B cell (primary cell): ENCODE measurements at regions of chr14 and their contacts with region 1.

Region 1: DNA sequence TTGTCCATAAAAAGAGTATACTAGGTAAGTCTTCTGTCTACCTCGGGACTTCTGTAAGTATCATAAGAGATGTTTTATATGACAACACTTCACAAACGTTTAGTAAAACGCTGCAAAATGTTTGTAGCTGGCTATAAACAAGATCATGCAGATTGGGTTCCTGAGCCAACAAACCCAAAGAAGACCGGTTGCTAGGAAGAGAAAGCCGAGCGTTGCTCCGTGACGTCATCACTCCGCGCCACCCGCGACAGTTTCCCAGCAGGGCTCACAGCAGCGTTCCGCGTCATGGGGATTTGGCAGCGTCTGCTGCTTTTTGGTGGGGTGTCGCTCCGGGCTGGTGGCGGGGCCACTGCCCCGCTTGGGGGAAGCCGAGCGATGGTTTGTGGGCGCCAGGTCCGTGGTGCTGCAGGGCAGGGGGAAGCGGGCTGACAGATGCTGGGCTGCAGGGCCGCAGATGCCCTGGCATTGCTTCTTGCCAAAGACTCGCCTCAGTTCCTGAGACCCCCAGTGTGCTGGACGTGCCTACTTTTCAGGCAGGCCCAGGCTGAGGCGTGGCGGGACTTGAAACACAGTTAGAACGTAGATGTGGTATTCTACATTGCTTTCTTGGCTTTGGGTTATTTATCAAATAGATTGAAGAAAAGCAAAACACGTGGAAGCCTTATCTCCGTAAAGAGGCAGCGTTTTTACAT is at the start of gene NUBPL:
- DNase-seq: peak; percentile 98
- ATAC-seq: peak; percentile 96
- H3K4me3 ChIP-seq: peak within 1 kb of the TSS; percentile 67 to 92 (median 84)
- H3K4me3 Mint-ChIP-seq: peak within 1 kb of the TSS; percentile 93
- H3K27ac ChIP-seq: peak within 1 kb of the TSS; percentile 62 to 94
- H3K27ac Mint-ChIP-seq: peak within 1 kb of the TSS; percentile 97
- H3K4me1 ChIP-seq: peaks cover 16 to 17% of the 10 kb centered on the region in 2 donors
- H3K4me1 Mint-ChIP-seq: peaks cover 25% of the 10 kb centered on the region
- H3K27me3 ChIP-seq: peaks cover 0 to 8% (median 3%) of the 10 kb centered on the region in 4 experiments
- H3K27me3 Mint-ChIP-seq: peaks cover 7% of the 10 kb centered on the region
- CTCF ChIP-seq: no peak
- total RNA-seq, gene NUBPL: 14.2 and 15.5 TPM in 2 replicates

Region 2: DNA sequence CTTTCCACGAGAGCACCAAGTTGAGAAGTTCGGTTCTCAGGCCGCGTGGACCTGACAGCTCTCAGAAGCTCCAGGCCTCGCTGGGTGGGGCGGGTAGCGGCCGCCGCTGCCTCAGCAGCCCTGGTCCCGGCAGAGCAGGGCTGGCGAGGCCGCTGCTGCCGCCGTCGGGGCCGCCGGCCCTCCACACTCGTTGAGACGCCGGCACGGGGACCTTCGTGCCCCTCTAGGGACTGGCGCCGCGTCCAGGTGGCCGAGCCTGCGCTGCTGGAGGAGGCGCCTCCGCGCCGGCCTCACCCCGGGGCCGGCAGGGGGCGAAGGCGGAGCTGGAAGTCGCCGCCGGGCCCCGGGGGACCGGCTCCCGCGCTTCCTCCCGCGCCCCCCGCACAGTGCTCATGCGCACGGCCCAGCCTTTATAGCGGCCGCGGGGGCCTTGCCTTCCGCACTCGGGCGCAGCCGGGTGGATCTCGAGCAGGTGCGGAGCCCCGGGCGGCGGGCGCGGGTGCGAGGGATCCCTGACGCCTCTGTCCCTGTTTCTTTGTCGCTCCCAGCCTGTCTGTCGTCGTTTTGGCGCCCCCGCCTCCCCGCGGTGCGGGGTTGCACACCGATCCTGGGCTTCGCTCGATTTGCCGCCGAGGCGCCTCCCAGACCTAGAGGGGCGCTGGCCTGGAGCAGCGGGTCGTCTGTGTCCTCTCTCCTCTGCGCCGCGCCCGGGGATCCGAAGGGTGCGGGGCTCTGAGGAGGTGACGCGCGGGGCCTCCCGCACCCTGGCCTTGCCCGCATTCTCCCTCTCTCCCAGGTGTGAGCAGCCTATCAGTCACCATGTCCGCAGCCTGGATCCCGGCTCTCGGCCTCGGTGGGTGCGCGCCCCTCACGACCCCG is 686.9 kb before region 1 on chr14 and contains the start of gene COCH:
- CTCF ChIA-PET with region 1: no interaction called
- POLR2A ChIA-PET with region 1: no interaction called
- intact Hi-C with region 1: loop called (anchors 10 kb)
- DNase-seq: peak; percentile 76
- ATAC-seq: peak; percentile 88
- H3K4me3 ChIP-seq: peak within 1 kb of the TSS; percentile 15 to 83 (median 69)
- H3K4me3 Mint-ChIP-seq: peak within 1 kb of the TSS; percentile 92
- H3K27ac ChIP-seq: no peak within 1 kb of the TSS
- H3K27ac Mint-ChIP-seq: peak within 1 kb of the TSS; percentile 84
- H3K4me1 ChIP-seq: peaks cover 20 to 21% of the 10 kb centered on the region in 2 donors
- H3K4me1 Mint-ChIP-seq: peaks cover 25% of the 10 kb centered on the region
- H3K27me3 ChIP-seq: peaks cover 0 to 23% (median 12%) of the 10 kb centered on the region in 4 experiments
- H3K27me3 Mint-ChIP-seq: peaks cover 10% of the 10 kb centered on the region
- CTCF ChIP-seq: peak; percentile 43
- total RNA-seq, gene COCH: 24.4 and 25.7 TPM in 2 replicates